Heart left ventricle (tissue), 16 donors: ENCODE measurements at regions of chr12 and their contacts with region 1.

Region 1: GRCh38 chr12:132887513-132888351 is at the start of gene CHFR:
- DNase-seq: peak; percentile 97 to 99 (median 98)
- ATAC-seq: peak; percentile 99 to 100 (median 100)
- H3K4me3 ChIP-seq: peak within 1 kb of the TSS; percentile 69 to 98 (median 90)
- H3K27ac ChIP-seq: peak within 1 kb of the TSS; percentile 80 to 100 (median 96)
- H3K4me1 ChIP-seq: peaks cover 0 to 24% (median 6%) of the 10 kb centered on the region in 12 donors
- H3K27me3 ChIP-seq: no peaks in the 10 kb centered on the region
- CTCF ChIP-seq: no peak
- POLR2A ChIP-seq: peak in 1 of 2 donors; percentile 62
- total RNA-seq, gene CHFR: 10.6 to 33.5 (median 16.4) TPM

Region 2: GRCh38 chr12:132300789-132301722 is 586.7 kb before region 1 on chr12:
- intact Hi-C with region 1: no loop called
- DNase-seq: peak in 1 of 5 donors; percentile 47
- ATAC-seq: no peak
- H3K4me3 ChIP-seq: no peak overlapping the region
- H3K27ac ChIP-seq: no peak overlapping the region
- H3K4me1 ChIP-seq: no peaks in the 10 kb centered on the region
- H3K27me3 ChIP-seq: peaks cover 0 to 13% (median 0%) of the 10 kb centered on the region in 9 donors
- CTCF ChIP-seq: no peak
- POLR2A ChIP-seq: no peak

Region 3: DNA sequence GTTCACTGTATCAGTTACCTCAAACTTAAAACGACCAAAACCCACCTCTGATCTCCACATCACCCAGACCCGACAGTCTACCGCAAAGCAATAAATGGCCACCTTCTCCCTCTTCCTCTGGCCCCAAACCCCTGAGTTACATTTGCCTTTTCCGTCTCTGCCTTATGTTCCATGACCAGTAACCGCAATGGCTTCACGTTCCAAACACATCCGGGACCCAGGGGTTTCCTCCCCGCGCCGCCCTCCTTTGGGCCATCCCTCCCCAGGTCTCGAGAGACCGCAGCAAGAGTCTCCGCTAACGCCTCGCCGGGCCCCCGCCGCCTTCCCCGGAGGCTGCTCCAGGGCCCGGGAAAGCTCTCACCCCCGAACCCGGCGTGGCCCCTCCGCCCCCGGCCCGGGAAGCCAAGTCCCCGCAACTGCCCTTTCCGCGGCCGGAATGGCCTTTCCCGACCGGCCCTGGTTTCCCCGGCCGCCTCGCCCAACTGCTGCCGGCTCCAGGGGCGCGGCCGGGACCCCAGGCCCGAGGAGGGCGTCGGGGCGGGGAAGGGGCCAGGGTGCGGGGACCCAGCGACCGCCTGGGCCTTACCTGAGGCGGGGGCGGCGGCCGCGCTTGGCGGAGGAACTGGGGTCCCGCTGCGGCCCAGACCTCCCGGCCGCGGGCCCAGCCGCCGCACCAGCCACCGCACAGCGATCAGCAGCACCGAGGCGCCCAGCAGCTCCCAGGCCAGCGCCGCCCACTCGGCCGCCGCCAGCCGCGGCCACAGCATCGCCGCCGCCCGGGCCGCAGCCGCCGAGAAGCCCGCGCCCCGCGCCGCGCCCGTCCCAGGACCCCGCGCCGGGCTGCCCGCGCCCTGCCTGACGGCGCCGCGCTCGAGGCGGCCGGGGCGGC is 126.5 kb before region 1 on chr12 and contains the start of gene ANKLE2:
- intact Hi-C with region 1: loop called in 2 of 10 experiments (anchors 10 kb)
- DNase-seq: peak; percentile 49 to 76 (median 62)
- ATAC-seq: peak in 3 of 4 donors; percentile 36 to 41 (median 38)
- H3K4me3 ChIP-seq: peak within 1 kb of the TSS; percentile 77 to 99 (median 94)
- H3K27ac ChIP-seq: peak within 1 kb of the TSS; percentile 84 to 99 (median 96)
- H3K4me1 ChIP-seq: peaks cover under 1 to 35% (median 24%) of the 10 kb centered on the region in 12 donors
- H3K27me3 ChIP-seq: no peaks in the 10 kb centered on the region
- CTCF ChIP-seq: no peak
- POLR2A ChIP-seq: no peak
- total RNA-seq, gene ANKLE2: 20.7 to 45.2 (median 29.1) TPM

Region 4: DNA sequence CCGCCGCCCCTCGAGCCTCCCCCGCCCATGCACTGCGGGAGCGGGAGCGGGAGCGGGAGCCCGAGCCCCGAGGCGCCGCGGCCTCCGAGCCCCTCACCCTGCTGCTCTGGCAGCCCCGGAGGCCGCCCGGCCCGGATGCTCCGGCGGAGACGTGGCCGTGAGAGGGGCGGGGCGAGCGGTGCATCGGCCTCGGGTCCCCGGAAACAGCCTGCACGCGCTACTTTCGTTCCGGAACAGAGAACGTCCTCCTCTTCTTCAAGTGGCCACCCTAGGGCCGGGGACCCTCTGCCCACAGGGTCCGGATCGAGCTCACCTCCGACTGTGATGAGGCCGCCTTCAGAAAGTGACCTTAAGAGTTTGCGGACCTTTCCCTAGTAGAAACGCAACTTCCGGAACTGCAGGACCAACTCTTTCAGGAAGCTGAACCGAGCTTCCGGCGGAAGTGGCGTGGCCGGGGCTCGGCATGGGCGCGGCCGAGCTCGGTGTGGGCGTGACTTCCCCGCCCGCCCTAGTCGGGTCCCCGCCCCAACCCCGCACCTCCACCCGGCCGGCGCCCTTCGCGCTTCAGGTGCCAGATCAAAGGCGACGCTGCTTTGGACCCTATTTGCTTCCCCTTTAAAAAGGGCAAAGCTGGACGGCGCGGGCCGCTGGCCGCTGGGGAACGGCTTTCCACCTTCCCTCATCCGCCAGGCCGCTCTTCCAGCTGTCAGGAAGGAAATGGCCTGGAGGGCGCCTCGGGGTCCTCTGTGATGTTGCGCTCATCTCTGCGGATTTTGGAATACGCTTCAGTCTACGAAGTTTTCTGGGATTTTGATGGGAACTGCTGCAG is 58.8 kb before region 1 on chr12 and contains the start of gene GOLGA3:
- intact Hi-C with region 1: loop called in 2 of 10 experiments (anchors 2 to 5 kb)
- DNase-seq: peak; percentile 94 to 97 (median 95)
- ATAC-seq: peak; percentile 96 to 98 (median 96)
- H3K4me3 ChIP-seq: peak within 1 kb of the TSS; percentile 57 to 98 (median 90)
- H3K27ac ChIP-seq: peak within 1 kb of the TSS; percentile 92 to 100 (median 98)
- H3K4me1 ChIP-seq: peaks cover 0 to 28% (median 20%) of the 10 kb centered on the region in 12 donors
- H3K27me3 ChIP-seq: no peaks in the 10 kb centered on the region
- CTCF ChIP-seq: no peak
- POLR2A ChIP-seq: peak in 1 of 2 donors; percentile 38
- total RNA-seq, gene GOLGA3: 28.3 to 46.2 (median 37.3) TPM

Region 5: GRCh38 chr12:132858718-132859266 is 28.9 kb before region 1 on chr12:
- intact Hi-C with region 1: no loop called
- DNase-seq: peak in 1 of 5 donors; percentile 18
- ATAC-seq: peak in 3 of 4 donors; percentile 27 to 48 (median 38)
- H3K4me3 ChIP-seq: no peak overlapping the region
- H3K27ac ChIP-seq: no peak overlapping the region
- H3K4me1 ChIP-seq: no peaks in the 10 kb centered on the region
- H3K27me3 ChIP-seq: no peaks in the 10 kb centered on the region
- CTCF ChIP-seq: no peak
- POLR2A ChIP-seq: no peak

Region 6: GRCh38 chr12:132908145-132909044 is 20.7 kb after region 1 on chr12:
- intact Hi-C with region 1: loop called in 1 of 10 experiments (anchors 2 kb)
- DNase-seq: peak; percentile 97 to 98 (median 98)
- ATAC-seq: peak; percentile 96 to 98 (median 98)
- H3K4me3 ChIP-seq: peak overlapping the region; percentile 18 to 83 (median 64)
- H3K27ac ChIP-seq: peak overlapping the region; percentile 47 to 85 (median 72)
- H3K4me1 ChIP-seq: peaks cover 0 to 24% (median 8%) of the 10 kb centered on the region in 12 donors
- H3K27me3 ChIP-seq: peaks cover 0 to 27% (median 5%) of the 10 kb centered on the region in 9 donors
- CTCF ChIP-seq: no peak
- POLR2A ChIP-seq: peak in 1 of 2 donors; percentile 39

Region 7: GRCh38 chr12:132956011-132956788 is 68.5 kb after region 1 on chr12 and contains the start of gene ZNF605:
- intact Hi-C with region 1: loop called in 1 of 10 experiments (anchors 2 kb)
- DNase-seq: peak; percentile 92 to 96 (median 94)
- ATAC-seq: peak; percentile 83 to 96 (median 94)
- H3K4me3 ChIP-seq: peak within 1 kb of the TSS; percentile 71 to 98 (median 91)
- H3K27ac ChIP-seq: peak within 1 kb of the TSS; percentile 60 to 99 (median 96)
- H3K4me1 ChIP-seq: peaks cover 0 to 23% (median 11%) of the 10 kb centered on the region in 12 donors
- H3K27me3 ChIP-seq: no peaks in the 10 kb centered on the region
- CTCF ChIP-seq: no peak
- POLR2A ChIP-seq: peak in 1 of 2 donors; percentile 26
- total RNA-seq, gene ZNF605: 3.4 to 14.2 (median 10.3) TPM

Region 8: DNA sequence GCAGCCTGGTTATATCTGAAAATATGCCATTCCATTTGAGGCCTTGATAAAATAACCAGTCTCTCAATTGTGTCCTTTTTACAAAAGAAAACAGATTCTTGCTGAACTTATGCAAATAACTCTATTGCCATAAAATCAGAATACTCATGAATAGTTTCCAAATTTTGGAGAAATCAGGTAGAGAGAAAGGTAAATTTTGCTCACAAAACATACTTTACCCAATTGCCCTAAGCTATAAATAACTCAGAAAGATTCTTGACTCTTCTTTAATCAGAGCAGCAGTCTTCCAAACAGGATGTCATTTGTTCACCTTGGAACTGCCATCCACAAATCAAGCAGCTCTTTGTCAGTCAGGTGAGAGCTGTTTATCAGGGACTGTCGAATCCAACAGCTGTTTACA is 111.0 kb after region 1 on chr12:
- intact Hi-C with region 1: no loop called
- DNase-seq: no peak
- ATAC-seq: no peak
- H3K4me3 ChIP-seq: no peak overlapping the region
- H3K27ac ChIP-seq: no peak overlapping the region
- H3K4me1 ChIP-seq: no peaks in the 10 kb centered on the region
- H3K27me3 ChIP-seq: no peaks in the 10 kb centered on the region
- CTCF ChIP-seq: no peak
- POLR2A ChIP-seq: no peak